Dendritic cell treated with granulocyte-macrophage colony-stimulating factor and Interleukin-4, amounts not matched to agents 40 ng/mL and 50 ng/mL, for 4 days (primary cell): ENCODE measurements at regions of chr22 and their contacts with region 1.

Region 1: DNA sequence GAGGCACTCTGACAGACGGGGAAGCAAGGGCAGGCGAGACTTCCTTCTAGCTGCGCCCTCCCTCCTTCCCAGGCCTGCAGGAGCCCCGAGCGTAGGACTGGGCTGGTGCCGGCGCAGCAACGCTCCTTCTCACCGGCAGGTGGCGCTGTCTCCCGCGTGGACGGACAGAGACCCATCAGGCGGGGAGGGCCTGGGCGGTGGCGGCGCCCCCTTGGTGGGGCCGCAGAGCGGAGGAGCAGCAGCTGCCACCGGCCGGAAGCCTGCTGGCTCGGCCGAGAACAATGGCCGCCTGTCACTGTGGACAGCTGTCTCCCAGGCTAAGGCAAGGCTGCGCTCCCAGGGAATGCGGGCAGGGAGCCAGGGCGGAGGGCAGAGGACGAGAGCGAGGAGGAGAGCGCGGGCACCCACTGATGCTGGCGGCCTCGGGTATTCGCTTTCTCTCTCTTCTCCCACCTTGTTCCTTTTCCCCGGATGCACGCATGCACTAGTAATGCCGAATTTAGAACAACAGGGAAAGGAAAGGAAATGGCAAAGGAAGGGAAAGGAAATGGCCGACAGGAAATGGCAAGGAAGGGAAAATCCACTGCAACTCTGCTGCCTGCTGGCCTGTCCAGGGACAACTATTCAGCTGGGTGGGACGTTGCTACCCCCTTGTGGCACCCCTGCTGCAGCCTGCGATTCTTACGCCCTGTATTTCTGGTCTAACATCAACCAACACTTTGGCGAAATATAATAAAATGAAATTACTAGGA is 14.4 kb downstream of the PPM1F start:
- H3K4me3 Mint-ChIP-seq: peak overlapping the region; percentile 80
- H3K27ac Mint-ChIP-seq: peak overlapping the region; percentile 100
- H3K4me1 Mint-ChIP-seq: peaks cover 77% of the 10 kb centered on the region
- H3K27me3 Mint-ChIP-seq: no peaks in the 10 kb centered on the region

Region 2: DNA sequence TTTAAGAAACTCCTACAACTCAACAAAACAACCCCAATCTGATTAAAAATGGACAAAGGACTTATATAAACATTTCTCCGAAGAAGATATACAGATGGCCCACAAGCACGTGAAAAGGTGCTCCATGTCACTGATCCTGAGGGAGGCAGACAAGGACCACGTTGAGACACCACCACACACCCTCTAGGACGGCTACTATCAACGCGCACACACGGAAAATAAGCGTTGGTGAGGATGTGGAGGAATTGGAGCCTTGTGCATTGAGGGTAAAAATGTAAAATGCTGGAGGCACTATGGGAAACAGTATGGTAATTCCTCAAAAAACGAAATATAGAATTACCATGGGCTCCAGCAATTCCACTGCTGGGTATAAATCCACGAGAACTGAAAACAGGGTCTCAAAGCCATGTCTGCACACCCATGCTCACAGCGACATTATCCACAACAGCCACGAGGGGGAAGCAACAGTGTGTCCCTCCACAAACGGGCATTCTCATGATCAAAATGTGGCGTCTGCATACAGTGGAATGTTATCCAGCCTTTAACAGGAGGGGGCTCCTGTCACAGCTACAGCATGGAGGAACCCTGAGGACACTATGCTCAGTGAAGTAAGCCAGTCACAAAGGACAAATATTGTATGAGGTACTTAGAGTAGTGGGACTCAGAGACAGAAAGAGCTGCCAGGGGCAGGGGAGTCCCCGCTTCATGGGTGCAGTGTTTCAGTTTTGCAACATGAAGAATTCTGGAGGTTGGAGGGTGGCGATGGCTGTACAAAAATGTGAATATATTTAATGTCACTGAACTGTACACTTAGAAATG is 225.1 kb before region 1 on chr22:
- intact Hi-C with region 1: loop called (anchors 5 kb)
- H3K4me3 Mint-ChIP-seq: no peak overlapping the region
- H3K27ac Mint-ChIP-seq: no peak overlapping the region
- H3K4me1 Mint-ChIP-seq: peaks cover 20% of the 10 kb centered on the region
- H3K27me3 Mint-ChIP-seq: no peaks in the 10 kb centered on the region

Region 3: GRCh38 chr22:21735200-21736076 is 202.8 kb before region 1 on chr22 and contains the start of gene YPEL1:
- intact Hi-C with region 1: loop called (anchors 1 kb)
- H3K4me3 Mint-ChIP-seq: peak within 1 kb of the TSS; percentile 79
- H3K27ac Mint-ChIP-seq: peak within 1 kb of the TSS; percentile 80
- H3K4me1 Mint-ChIP-seq: peaks cover 14% of the 10 kb centered on the region
- H3K27me3 Mint-ChIP-seq: peaks cover 1% of the 10 kb centered on the region

Region 4: DNA sequence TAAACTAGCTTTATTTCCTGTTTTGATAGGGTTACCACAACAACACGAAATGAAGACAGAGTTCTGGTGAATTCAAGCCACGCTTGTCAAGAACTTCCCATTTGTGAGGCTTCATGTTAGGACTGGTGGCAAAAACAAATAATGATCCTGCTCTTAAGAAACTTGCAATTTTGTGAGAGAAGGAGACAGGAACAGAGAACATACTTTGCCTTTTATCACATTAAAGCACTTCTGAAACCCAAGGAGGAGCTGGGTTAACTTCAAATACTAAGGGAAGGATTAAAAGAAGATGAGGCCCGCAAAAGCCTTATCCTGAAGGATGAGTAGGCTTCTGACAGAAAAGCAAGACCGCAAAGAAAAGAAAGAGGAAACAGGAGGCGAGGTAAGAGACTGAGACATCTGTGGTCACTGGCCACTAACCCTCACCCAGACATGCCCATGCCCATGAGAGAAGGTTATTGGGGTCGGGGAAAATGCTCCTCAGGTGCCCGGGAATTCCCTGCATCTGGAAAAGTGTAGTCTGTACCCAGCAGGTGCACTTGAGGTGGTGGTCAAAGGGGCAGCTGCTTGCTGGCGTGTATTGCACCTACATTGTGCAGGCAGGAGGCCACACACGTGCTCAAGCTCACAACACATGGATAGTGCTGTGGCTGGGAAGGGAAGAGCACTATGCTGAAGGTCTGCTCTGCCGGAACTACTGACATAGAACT is 121.3 kb before region 1 on chr22:
- intact Hi-C with region 1: loop called (anchors 2 kb)
- H3K4me3 Mint-ChIP-seq: peak overlapping the region; percentile 86
- H3K27ac Mint-ChIP-seq: peak overlapping the region; percentile 99
- H3K4me1 Mint-ChIP-seq: peaks cover 69% of the 10 kb centered on the region
- H3K27me3 Mint-ChIP-seq: no peaks in the 10 kb centered on the region

Region 5: DNA sequence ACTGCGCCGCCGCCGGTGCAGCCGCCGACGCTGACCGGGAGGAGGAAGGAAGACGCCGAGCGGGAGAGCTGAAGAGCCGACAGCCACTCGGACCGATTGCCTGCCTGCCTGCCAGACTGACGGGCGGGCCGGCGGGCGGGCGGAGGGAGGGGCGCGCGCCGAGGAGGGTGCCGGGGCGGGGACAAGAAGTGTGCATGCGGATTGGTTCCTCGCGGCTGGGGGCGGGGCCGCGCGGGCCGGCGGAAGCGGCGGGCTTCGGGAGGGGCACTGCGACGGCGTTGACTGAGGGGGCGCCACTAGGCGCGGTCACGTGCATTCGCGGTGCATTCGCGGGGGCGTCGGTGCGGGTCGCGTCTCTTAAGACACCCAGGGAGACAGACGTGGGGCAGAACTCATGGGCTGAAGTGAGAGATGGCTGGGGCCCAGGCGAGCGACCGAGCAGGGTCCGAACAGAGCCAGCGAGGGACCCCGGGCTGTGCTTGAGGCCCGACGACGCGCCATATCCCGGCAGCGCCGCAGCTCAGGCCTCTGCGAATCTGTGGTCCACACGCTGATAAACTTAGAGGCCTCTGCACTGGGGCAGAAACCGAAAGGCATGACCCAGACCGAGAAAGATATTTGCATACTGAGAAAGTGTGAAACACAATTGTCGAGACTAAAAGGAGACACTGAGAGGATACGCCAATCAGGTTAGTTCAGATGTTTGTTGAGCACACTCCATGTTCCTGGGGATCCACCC is 70.5 kb before region 1 on chr22 and contains the start of gene MAPK1:
- intact Hi-C with region 1: loop called (anchors 5 kb)
- H3K4me3 Mint-ChIP-seq: peak within 1 kb of the TSS; percentile 93
- H3K27ac Mint-ChIP-seq: peak within 1 kb of the TSS; percentile 95
- H3K4me1 Mint-ChIP-seq: peaks cover 46% of the 10 kb centered on the region
- H3K27me3 Mint-ChIP-seq: no peaks in the 10 kb centered on the region

Region 6: DNA sequence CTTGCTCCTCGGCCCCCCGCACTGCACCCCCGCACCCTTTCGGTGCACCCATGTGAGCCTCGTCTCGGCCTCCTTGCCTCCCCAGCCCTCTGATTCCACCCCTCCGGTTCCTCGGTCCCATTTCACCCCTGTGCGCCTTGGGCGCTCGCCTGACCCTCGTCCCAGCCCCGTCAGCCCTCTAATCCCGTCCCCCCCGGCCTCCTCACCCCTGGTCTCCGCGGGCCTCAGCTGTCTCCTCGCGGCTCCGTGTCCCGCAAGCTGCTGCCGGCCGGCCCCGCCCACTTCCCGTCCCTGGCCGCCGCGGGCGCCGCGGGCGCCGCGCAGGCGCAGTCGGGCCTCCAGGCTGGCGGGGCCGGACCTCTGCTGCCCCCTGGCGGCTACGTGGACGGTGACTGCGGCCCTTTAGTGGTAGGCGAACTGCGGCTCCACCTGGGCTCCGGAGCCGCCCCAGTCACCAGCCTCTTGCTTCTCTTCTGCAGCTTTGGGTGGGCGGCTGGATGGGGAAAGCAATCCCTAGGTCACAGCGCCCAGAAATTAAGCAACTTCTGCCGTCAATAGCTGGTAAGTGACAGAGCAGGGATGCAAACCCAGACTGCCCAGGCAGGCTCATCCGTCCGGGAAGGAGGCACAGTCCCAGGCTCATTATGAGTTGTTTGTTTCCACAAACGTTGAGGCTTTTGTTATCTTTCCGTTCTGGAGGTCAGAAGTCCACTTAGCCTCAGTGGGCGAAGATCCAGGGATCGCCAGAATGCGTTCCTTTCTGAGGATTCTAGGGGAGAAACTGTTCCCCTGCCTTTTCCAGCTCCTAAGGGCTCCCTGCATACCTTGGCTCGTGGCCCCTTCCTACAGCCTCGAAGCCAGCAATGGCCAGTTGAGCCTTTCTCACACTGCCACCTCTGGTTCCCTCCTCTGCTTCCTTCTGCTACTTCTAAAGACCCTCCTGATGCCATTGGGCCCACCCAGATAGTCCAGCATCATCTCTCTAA is 14.6 kb after region 1 on chr22 and contains the start of gene PPM1F:
- intact Hi-C with region 1: loop called (anchors 1 kb)
- H3K4me3 Mint-ChIP-seq: peak within 1 kb of the TSS; percentile 95
- H3K27ac Mint-ChIP-seq: peak within 1 kb of the TSS; percentile 100
- H3K4me1 Mint-ChIP-seq: peaks cover 46% of the 10 kb centered on the region
- H3K27me3 Mint-ChIP-seq: no peaks in the 10 kb centered on the region